ENCODE measurements at regions of chr3 and their contacts with region 1.

Region 1: GRCh38 chr3:101573449-101574387 is at the start of gene PCNP:
- DNase-seq: peak; percentile 99
- H3K4me3 Mint-ChIP-seq: peak within 1 kb of the TSS; percentile 90
- H3K27ac Mint-ChIP-seq: peak within 1 kb of the TSS; percentile 95
- H3K4me1 Mint-ChIP-seq: peaks cover 52% of the 10 kb centered on the region
- H3K27me3 Mint-ChIP-seq: no peaks in the 10 kb centered on the region
- total RNA-seq, gene PCNP: 163 to 172 TPM

Region 2: GRCh38 chr3:101219842-101220560 is 353.7 kb before region 1 on chr3:
- CTCF ChIA-PET with region 1: no interaction called
- POLR2A ChIA-PET with region 1: no interaction called
- DNase-seq: no peak
- H3K4me3 Mint-ChIP-seq: no peak overlapping the region
- H3K27ac Mint-ChIP-seq: no peak overlapping the region
- H3K4me1 Mint-ChIP-seq: no peaks in the 10 kb centered on the region
- H3K27me3 Mint-ChIP-seq: no peaks in the 10 kb centered on the region

Region 3: GRCh38 chr3:101512646-101513418 is 60.9 kb before region 1 on chr3 and contains the start of gene SENP7:
- CTCF ChIA-PET with region 1: interaction called, 21 read pairs
- POLR2A ChIA-PET with region 1: interaction called, 44 read pairs
- DNase-seq: peak; percentile 79
- H3K4me3 Mint-ChIP-seq: peak within 1 kb of the TSS; percentile 100
- H3K27ac Mint-ChIP-seq: peak within 1 kb of the TSS; percentile 92
- H3K4me1 Mint-ChIP-seq: peaks cover 49% of the 10 kb centered on the region
- H3K27me3 Mint-ChIP-seq: no peaks in the 10 kb centered on the region
- total RNA-seq, gene SENP7: 28.3 to 30.5 TPM

Region 4: DNA sequence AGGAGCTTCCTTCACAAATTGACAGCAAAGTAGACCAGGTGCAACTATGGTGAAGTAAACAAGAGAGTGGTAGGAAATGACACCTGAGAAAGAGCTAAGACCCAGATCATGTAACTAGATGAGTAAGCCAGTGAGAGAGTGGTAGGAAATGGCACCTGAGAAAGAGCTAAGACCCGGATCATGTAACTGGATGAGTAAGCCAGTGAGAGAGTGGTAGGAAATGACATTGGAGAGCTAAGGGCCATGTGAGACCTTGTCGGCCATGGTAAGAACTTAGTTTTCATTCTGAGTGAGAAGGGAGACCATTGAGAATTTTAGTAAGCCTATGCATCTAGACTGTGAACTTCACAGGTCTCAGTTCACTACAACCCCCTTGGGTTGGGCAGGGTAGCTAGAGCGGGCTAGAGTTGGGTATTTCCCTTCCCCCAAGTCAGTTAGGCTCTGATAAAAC is 55.3 kb before region 1 on chr3:
- CTCF ChIA-PET with region 1: interaction called, 21 read pairs
- POLR2A ChIA-PET with region 1: interaction called, 44 read pairs
- DNase-seq: peak; percentile 60
- H3K4me3 Mint-ChIP-seq: peak overlapping the region; percentile 28
- H3K27ac Mint-ChIP-seq: peak overlapping the region; percentile 81
- H3K4me1 Mint-ChIP-seq: peaks cover 52% of the 10 kb centered on the region
- H3K27me3 Mint-ChIP-seq: no peaks in the 10 kb centered on the region

Region 5: DNA sequence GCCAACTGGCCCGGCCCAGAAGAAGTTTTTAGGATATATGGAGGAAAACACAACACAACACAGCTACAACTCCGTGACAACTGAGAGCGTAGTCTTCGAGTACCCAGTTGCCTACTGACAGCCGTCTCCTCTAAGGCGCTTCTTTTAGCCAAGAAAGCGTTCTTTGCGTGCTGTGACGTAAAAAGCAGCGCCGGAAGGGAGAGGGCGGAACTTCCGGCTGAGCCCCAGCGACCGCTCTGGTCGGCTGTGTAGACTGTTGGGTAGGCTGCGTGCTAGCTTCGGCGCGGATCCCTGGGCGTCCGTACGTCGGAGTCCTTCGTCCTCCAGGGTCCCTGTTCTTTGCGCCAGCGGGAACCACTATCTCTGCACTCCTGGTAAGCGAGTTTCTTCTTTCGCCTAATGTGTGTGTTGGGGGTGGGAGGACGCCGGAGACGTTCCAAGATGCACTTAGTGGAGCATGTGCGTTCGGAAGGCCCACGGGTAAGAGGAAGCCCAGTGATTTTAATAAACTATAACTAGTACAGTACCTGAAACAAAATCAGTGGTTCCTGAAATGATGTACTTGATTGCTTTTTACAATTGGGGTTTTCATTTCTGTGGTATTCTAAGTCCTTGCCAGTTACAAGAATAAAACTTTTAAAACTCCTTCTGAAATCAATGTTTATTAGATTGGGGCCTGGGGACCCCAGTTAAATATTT is 11.9 kb before region 1 on chr3 and contains the start of gene TRMT10C:
- CTCF ChIA-PET with region 1: interaction called, 47 read pairs
- POLR2A ChIA-PET with region 1: interaction called, 73 read pairs
- DNase-seq: peak; percentile 95
- H3K4me3 Mint-ChIP-seq: peak within 1 kb of the TSS; percentile 98
- H3K27ac Mint-ChIP-seq: peak within 1 kb of the TSS; percentile 93
- H3K4me1 Mint-ChIP-seq: peaks cover 37% of the 10 kb centered on the region
- H3K27me3 Mint-ChIP-seq: peaks cover under 1% of the 10 kb centered on the region
- total RNA-seq, gene TRMT10C: 21.4 to 22.7 TPM

Region 6: DNA sequence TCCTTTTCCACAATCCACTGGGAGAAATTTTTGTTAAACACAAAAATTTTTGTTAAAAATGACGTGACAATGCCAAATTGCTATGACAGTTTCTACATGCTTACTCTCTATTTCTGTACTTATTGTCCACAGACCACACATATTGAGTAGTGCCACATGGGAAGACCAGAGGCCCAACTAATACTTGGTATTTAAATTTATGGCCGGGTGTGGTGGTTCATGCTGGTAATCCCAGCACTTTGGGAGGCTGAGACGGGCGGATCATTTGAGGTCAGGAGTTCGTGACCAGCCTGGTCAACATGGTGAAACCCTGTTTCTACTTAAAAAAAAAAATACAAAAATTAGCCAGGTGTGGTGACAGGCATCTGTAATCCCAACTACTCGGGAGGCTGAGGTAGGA is 82.9 kb after region 1 on chr3:
- CTCF ChIA-PET with region 1: no interaction called
- POLR2A ChIA-PET with region 1: no interaction called
- DNase-seq: no peak
- H3K4me3 Mint-ChIP-seq: no peak overlapping the region
- H3K27ac Mint-ChIP-seq: no peak overlapping the region
- H3K4me1 Mint-ChIP-seq: no peaks in the 10 kb centered on the region
- H3K27me3 Mint-ChIP-seq: no peaks in the 10 kb centered on the region

Region 7: DNA sequence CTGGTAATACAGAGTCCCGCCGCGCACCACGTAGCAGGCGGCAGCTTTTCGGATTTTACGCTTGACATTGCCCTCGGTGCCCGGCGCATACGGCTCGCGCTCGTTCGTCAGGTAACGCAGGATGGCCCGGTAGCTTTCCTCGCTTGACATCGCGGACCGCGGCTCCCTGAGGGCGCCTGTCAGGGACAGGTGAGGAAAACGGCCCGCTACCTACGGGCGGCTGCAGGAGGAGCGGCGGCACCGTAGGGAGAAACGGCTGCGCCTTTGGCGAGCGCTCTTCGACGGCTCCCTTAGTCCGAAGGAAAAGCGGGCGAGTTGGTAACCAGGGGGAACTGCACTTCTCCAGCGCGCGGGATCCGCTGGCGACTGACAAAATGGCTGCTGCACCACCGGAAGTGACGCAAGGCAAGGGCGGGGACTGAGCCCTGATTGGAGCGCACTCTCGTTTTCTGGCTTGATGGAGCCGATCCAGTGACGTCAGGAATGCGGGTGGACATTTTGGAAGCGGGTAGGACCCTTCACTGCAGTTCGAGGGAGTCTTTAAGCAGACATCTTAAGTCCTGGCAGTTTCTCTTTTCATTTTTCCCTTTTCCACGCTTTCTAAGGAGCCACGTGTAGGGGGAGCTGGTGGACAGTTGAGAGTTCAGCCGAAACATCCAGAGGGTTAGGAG is 103.2 kb after region 1 on chr3 and contains the start of gene ZBTB11:
- CTCF ChIA-PET with region 1: interaction called, 16 read pairs
- POLR2A ChIA-PET with region 1: interaction called, 59 read pairs
- DNase-seq: peak; percentile 100
- H3K4me3 Mint-ChIP-seq: peak within 1 kb of the TSS; percentile 82
- H3K27ac Mint-ChIP-seq: peak within 1 kb of the TSS; percentile 97
- H3K4me1 Mint-ChIP-seq: peaks cover 57% of the 10 kb centered on the region
- H3K27me3 Mint-ChIP-seq: no peaks in the 10 kb centered on the region
- total RNA-seq, gene ZBTB11: 29.3 to 31.9 TPM

Region 8: DNA sequence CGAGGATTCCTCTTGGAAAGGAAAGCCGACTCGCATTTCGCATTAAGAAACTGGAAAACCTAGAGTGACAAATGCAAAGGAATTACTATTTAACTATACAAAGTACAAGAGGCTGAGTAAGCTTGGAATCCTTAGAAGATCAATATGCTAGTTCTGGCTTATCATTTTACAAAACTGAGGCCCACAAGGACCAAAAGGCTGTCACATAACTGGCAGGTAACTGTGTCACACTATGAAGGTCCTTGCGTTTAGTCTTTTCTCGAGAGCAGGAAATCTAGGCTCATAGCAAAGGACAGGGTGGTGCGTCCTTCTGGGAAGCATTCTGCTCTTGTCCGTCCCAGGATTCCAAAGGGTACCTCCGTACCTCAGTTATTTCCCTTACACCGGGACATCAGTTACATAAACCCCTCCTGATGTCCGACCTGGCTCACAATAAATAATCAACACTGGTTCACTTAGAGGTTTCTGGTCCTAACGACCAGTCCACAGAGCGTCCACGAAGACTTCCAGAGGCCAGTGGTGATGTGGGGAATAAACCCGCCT is 112.2 kb after region 1 on chr3:
- CTCF ChIA-PET with region 1: interaction called, 17 read pairs
- POLR2A ChIA-PET with region 1: interaction called, 31 read pairs
- DNase-seq: no peak
- H3K4me3 Mint-ChIP-seq: peak overlapping the region; percentile 99
- H3K27ac Mint-ChIP-seq: peak overlapping the region; percentile 93
- H3K4me1 Mint-ChIP-seq: peaks cover 48% of the 10 kb centered on the region
- H3K27me3 Mint-ChIP-seq: no peaks in the 10 kb centered on the region

Measured in activated CD4-positive, alpha-beta memory T cell treated with anti-CD3 and anti-CD28 coated beads, Interleukin-2, amount 10 ng/mL, durations not matched to agents 7 days and 5 days (primary cell).